Dendritic cell treated with granulocyte-macrophage colony-stimulating factor and Interleukin-4, amounts not matched to agents 40 ng/mL and 50 ng/mL, for 4 days (primary cell): ENCODE measurements at regions of chr7 and their contacts with region 1.

Region 1: GRCh38 chr7:25389489-25390106 is 161.3 kb upstream of the NPVF start:
- H3K4me3 Mint-ChIP-seq: no peak overlapping the region
- H3K27ac Mint-ChIP-seq: no peak overlapping the region
- H3K4me1 Mint-ChIP-seq: no peaks in the 10 kb centered on the region
- H3K27me3 Mint-ChIP-seq: peaks cover 16% of the 10 kb centered on the region

Region 2: GRCh38 chr7:25515633-25516275 is 126.2 kb after region 1 on chr7:
- intact Hi-C with region 1: no loop called
- H3K4me3 Mint-ChIP-seq: no peak overlapping the region
- H3K27ac Mint-ChIP-seq: no peak overlapping the region
- H3K4me1 Mint-ChIP-seq: no peaks in the 10 kb centered on the region
- H3K27me3 Mint-ChIP-seq: no peaks in the 10 kb centered on the region

Region 3: DNA sequence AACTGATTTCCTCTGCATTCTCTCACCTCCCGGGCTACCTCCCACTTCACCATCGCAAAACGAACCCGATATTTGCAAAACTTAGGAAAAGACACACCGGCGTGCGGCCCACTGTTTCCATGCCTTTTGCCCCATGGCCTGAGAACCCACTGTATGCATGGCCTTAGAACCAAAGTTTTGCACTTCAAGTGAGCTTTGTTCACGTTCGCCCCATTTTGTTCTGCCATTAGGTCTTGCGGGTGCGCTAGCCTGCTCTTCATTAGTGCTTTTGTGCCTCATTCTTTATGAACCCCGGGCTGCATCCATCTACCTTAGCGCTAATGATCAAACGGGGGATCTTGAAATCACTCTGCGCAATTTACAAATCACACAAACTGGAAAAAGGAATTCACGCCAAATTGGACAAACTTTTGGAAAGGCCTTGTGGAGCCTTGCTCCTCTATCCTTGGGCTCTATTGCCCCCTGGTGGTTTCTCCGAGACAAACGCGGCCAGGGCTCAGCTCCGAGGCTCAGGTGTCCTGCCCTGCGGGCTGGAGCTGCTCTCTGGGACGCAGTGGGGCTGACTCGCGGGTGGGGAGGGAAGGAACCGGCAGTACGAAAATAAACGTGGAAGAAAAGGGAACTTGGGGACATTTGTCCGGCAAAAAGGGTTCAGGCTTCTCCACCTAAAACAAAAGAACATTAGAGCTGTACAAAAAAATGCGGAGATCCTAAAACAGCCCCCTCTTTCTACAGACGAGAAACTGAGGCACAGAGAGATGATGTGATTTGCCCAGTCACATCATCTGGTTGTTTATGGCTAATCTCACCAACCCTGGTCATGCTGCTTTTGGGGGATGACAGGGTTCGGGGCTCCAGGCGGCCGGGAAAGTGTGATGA is 462.0 kb after region 1 on chr7:
- intact Hi-C with region 1: loop called (anchors 5 kb)
- H3K4me3 Mint-ChIP-seq: peak overlapping the region; percentile 72
- H3K27ac Mint-ChIP-seq: no peak overlapping the region
- H3K4me1 Mint-ChIP-seq: peaks cover 10% of the 10 kb centered on the region
- H3K27me3 Mint-ChIP-seq: peaks cover 70% of the 10 kb centered on the region